GM10248 (cell line): ENCODE measurements at regions of chr5 and their contacts with region 1.

Region 1: GRCh38 chr5:103475629-103476240 is 86.9 kb downstream of the NUDT12 start:
- DNase-seq: peak; percentile 13
- CTCF ChIP-seq: peak; percentile 61

Region 2: DNA sequence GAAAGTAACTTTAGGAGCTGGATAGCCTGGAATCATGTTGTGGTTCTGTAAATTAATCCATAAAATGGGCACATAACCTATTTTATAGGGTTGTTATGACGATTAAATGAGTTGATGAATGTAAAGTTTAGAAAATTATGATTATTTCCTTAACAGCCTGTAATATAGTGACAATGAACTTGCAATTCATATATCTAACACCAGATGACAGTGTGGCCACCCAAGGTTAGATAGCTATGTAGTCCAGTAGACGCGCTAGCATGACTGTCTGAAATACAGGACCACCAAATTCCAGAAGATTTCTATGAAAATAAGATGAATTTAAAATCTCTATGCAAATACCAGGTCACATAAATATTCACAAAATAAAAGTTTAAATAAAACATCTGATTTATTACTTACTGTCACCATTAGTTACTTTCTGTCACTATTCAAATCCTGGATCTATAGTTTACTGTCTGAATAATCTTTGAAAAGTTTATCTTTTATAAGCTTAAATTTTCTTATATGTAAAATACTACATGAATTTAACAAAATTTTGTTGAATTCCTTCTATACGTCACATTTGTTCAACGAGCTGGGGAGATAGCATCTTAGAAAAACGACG is 243.2 kb before region 1 on chr5:
- CTCF ChIA-PET with region 1: interaction called, 77 read pairs
- POLR2A ChIA-PET with region 1: no interaction called
- DNase-seq: peak; percentile 23
- CTCF ChIP-seq: peak; percentile 61

Region 3: DNA sequence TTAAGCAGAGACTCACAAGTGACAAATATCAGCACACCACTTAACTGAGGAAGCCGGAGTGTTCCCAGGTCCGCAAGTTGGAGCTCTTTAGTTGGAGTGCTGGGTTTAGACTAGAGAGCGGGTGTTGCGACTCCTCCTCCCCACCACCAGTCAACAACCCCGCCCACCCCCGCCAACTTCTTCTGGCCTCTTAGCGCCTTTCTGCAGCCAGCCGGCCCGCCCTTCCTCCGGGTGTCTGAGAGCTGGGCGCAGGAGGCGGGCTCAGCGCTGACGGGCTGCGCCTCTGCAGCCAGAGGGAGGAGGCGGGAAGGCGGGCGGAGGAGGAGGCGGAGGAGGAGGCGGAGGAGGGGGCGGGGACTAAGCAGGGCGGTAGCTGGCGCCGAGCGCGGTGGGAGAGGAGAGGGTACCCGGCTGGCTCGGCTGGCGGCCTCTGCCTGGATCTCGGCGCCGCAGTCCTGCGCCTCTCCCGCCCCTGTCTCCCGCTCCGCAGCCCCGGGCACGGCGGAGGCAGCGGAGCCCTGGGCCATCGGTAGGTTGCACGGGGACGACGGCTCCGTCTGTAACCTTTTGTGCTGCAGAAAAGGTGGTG is 217.3 kb before region 1 on chr5 and contains the start of gene MACIR:
- CTCF ChIA-PET with region 1: interaction called, 17 read pairs
- POLR2A ChIA-PET with region 1: no interaction called
- DNase-seq: peak; percentile 91
- CTCF ChIP-seq: no peak

Region 4: DNA sequence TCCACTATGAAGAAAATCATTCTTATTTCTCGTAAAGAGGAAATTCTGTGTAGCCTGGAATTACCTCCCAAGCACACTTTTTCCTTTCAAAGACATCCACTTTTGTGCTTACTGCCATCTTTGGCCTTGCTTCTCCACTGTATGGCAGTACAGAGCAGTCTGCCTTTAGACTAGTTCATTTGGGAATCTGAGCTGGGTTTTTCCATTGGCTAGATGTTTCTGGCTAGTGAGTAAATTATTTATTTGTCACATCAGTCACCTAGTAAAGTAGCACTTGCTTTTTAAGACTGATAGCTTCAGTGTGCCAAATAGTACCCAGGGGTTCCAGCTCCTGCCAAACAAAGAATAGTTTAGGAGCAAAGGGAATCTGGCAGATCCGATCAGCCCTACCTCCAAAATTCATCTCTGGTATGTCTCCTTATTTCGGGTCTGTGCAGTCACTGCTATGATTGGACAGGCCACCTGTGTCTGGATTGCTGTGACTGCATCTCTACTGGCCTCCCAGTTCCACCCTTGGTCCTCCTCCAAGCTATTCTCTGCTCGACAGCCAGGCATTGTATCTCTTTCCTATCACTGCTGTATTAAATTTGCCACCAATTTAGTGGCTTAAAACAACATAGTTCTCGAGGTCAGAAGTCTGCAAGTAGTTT is 10.8 kb before region 1 on chr5:
- CTCF ChIA-PET with region 1: interaction called, 24 read pairs
- POLR2A ChIA-PET with region 1: no interaction called
- DNase-seq: no peak
- CTCF ChIP-seq: no peak

Region 5: DNA sequence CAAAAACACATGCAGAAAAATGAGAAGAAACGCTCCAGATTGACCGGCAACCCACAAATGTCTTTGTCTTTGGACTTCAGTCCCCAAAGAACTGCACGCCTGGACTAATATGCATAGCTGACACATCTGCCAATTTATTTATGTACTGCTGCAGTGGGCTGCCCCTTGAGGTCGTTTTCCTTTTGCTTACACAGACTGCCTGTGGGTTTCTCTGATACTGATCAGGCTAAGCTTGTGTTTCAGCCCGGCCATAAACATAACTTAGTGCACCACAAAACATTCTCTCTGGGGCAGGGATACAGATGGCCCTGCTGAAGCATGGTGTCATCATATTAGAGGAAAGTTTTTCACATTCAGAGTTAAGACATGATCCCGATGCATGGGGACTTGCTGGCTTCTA is 11.5 kb after region 1 on chr5:
- CTCF ChIA-PET with region 1: interaction called, 12 read pairs
- POLR2A ChIA-PET with region 1: no interaction called
- DNase-seq: no peak
- CTCF ChIP-seq: no peak

Region 6: GRCh38 chr5:103708601-103709000 is 232.9 kb after region 1 on chr5:
- CTCF ChIA-PET with region 1: no interaction called
- POLR2A ChIA-PET with region 1: no interaction called
- DNase-seq: no peak
- CTCF ChIP-seq: no peak